ENCODE measurements at regions of chr19 and their contacts with region 1.

Region 1: GRCh38 chr19:41570639-41571112 is 5.3 kb upstream of the CEACAM21 start:
- DNase-seq: no peak
- H3K4me3 ChIP-seq: no peak overlapping the region
- H3K27ac ChIP-seq: no peak overlapping the region
- H3K4me1 ChIP-seq: no peaks in the 10 kb centered on the region
- H3K27me3 ChIP-seq: no peaks in the 10 kb centered on the region
- CTCF ChIP-seq: peak; percentile 61 to 65 (median 63)
- POLR2A ChIP-seq: no peak

Region 2: GRCh38 chr19:41521931-41522555 is 48.6 kb before region 1 on chr19:
- intact Hi-C with region 1: loop called (anchors 1 kb)
- DNase-seq: no peak
- H3K4me3 ChIP-seq: peak overlapping the region; percentile 28 to 36
- H3K27ac ChIP-seq: peak overlapping the region; percentile 39
- H3K4me1 ChIP-seq: no peaks in the 10 kb centered on the region
- H3K27me3 ChIP-seq: no peaks in the 10 kb centered on the region
- CTCF ChIP-seq: no peak
- POLR2A ChIP-seq: no peak

Measured in vagina (tissue), 2 donors.